ENCODE measurements at regions of chr4 and their contacts with region 1.

Region 1: DNA sequence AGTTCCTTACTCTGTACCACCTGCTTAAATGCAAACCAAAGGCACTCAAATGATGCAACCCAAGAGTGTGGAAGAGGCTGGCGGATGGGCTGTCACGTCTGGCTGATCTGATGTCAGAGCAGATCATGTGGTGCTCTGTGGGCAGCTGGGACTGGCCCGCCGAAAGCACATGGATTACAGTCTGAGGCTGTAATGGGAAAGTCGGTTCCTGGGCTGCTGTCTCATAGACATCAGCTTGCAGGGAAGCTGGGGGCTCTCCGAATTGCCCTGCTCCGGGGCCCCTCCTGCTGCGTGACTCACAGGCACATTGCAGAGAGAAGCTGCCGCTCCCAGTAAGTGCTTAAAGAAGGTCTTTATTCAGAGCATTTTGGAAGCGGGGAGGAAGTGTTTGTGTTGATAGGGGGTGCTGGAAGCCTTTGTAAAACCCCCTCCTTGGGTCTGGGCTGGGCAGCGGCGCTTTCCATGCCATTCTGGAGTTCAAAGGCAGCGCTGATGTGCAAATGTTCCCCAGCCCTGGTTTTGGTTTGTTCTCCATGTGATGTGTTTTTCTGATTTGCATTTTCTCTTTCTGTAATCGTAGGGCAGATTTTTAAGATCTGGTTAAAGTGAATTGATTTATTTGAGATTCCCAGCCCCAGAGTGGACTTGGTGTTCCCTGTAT is 181.1 kb downstream of the LARP7 start:
- DNase-seq: peak; percentile 78 to 97 (median 90)

Region 2: GRCh38 chr4:112765317-112765975 is 52.6 kb before region 1 on chr4:
- intact Hi-C with region 1: loop called (anchors 5 kb)
- DNase-seq: peak in 1 of 42 donors; percentile 21

Measured in head of caudate nucleus (tissue), 42 donors.